RWPE1 (cell line): ENCODE measurements at regions of chr16 and their contacts with region 1.

Region 1: GRCh38 chr16:71883849-71884638 is at the start of gene ZNF821:
- DNase-seq: peak; percentile 79
- H3K27ac ChIP-seq: peak within 1 kb of the TSS; percentile 82
- CTCF ChIP-seq: peak; percentile 40

Region 2: DNA sequence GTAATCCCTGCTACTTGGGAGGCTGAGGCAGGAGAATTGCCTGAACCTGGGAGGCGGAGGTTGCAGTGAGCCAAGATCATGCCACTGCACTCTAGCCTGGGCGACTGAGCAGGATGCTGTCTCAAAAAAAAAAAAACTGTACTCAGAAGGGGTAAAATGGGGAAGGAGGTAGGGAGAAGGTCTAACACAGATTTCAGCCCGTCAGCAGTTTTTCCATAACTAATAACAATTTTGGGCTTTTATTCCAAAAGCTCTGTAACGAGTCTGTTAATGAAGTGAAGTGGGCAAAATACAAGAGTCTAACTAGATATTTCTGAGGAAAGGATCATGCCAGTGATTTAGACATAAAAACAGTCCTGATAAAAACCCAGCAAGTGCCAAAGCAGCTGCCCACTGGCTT is 10.8 kb before region 1 on chr16:
- CTCF ChIA-PET with region 1: interaction called, 13 read pairs
- POLR2A ChIA-PET with region 1: no interaction called
- DNase-seq: no peak
- H3K27ac ChIP-seq: no peak overlapping the region
- CTCF ChIP-seq: no peak

Region 3: GRCh38 chr16:71894921-71895678 is 11.1 kb after region 1 on chr16 and contains the start of gene IST1:
- CTCF ChIA-PET with region 1: interaction called, 23 read pairs
- POLR2A ChIA-PET with region 1: interaction called, 6 read pairs
- DNase-seq: peak; percentile 98
- H3K27ac ChIP-seq: peak within 1 kb of the TSS; percentile 96
- CTCF ChIP-seq: no peak

Region 4: GRCh38 chr16:72203401-72203800 is 319.4 kb after region 1 on chr16:
- CTCF ChIA-PET with region 1: no interaction called
- POLR2A ChIA-PET with region 1: no interaction called
- DNase-seq: peak; percentile 11
- H3K27ac ChIP-seq: peak overlapping the region; percentile 29; the same call in 1 of the 2 replicates
- CTCF ChIP-seq: no peak